ENCODE measurements at regions of chr22 and their contacts with region 1.

Region 1: DNA sequence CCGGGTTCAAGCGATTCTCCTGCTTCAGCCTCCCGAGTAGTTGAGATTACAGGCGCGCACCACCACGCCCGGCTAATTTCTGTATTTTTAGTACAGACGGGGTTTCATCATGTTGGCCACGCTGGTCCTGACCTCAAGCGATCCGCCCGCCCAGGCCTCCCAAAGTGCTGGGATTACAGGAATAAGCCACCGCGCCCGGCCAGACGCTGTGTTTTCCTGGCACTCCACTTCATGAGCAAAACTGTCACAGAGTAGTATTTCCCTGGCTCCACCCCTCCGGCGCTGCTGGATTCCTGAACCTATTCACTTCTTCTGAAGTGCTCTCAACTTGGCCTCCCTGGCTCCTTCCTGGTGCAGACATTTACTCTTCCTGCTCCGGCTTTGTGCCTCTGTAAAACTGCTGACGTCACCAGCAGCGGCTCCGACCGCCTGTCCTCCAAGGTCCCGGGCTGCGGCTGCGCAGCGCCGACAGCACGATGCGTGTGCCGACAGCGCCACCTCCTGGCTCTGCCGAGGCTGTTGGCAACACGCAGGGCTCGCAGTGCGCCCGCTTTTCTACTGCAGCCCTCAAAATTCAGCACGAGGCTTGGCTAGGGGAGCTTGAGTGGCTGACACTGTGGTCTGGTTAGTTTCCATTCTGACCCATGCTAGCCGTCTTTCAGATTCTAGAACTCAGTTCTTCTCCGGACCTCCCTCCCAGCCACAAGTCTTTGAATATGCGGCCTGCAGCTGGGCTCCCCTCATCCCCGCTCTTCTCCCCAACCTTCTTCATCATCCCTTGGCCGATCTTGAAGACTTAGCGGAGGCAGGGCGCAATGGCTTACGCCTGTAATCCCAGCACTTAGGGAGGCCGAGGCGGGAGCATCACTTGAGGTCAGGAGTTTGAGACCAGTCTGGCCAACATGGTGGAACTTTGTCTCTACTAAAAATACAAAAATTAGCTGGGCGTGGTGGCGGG is 36.6 kb downstream of the APOL3 start:
- DNase-seq: peak; percentile 95
- ATAC-seq: peak; percentile 99
- H3K4me3 Mint-ChIP-seq: peak overlapping the region; percentile 56
- H3K27ac Mint-ChIP-seq: peak overlapping the region; percentile 79
- H3K4me1 Mint-ChIP-seq: peaks cover 15% of the 10 kb centered on the region
- H3K27me3 Mint-ChIP-seq: peaks cover 2% of the 10 kb centered on the region

Region 2: GRCh38 chr22:35930933-35931332 is 193.0 kb before region 1 on chr22:
- CTCF ChIA-PET with region 1: interaction called, 16 read pairs
- DNase-seq: no peak
- ATAC-seq: no peak
- H3K4me3 Mint-ChIP-seq: no peak overlapping the region
- H3K27ac Mint-ChIP-seq: no peak overlapping the region
- H3K4me1 Mint-ChIP-seq: no peaks in the 10 kb centered on the region
- H3K27me3 Mint-ChIP-seq: peaks cover 19% of the 10 kb centered on the region

Region 3: DNA sequence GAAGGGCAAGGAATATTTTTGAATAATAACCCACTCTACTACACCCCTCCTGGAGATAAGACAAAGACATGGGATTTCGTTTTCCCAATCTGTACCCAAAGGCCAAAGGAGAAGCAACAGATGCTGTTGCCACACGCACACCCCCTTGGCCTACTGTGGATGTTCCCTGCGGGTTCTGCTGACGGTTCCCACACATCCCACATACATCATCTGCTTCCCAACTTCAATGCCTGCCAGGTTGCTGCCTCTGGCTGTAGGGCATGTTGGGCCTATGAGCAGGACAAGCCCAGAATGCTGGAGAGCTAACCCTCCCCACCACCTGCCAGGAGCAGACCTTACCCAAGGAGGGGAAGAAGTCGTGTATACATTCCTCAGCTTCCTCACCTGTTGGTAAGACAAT is 81.7 kb before region 1 on chr22:
- CTCF ChIA-PET with region 1: no interaction called
- DNase-seq: no peak
- ATAC-seq: no peak
- H3K4me3 Mint-ChIP-seq: no peak overlapping the region
- H3K27ac Mint-ChIP-seq: no peak overlapping the region
- H3K4me1 Mint-ChIP-seq: no peaks in the 10 kb centered on the region
- H3K27me3 Mint-ChIP-seq: peaks cover 28% of the 10 kb centered on the region

Region 4: GRCh38 chr22:36136475-36136874 is 12.5 kb after region 1 on chr22:
- CTCF ChIA-PET with region 1: interaction called, 12 read pairs
- DNase-seq: no peak
- ATAC-seq: no peak
- H3K4me3 Mint-ChIP-seq: no peak overlapping the region
- H3K27ac Mint-ChIP-seq: no peak overlapping the region
- H3K4me1 Mint-ChIP-seq: peaks cover 12% of the 10 kb centered on the region
- H3K27me3 Mint-ChIP-seq: no peaks in the 10 kb centered on the region

Measured in activated CD8-positive, alpha-beta memory T cell treated with anti-CD3 and anti-CD28 coated beads, Interleukin-2, amount 10 ng/mL, durations not matched to agents 7 days and 5 days (primary cell).